ENCODE measurements at regions of chr4 and their contacts with region 1.

Region 1: DNA sequence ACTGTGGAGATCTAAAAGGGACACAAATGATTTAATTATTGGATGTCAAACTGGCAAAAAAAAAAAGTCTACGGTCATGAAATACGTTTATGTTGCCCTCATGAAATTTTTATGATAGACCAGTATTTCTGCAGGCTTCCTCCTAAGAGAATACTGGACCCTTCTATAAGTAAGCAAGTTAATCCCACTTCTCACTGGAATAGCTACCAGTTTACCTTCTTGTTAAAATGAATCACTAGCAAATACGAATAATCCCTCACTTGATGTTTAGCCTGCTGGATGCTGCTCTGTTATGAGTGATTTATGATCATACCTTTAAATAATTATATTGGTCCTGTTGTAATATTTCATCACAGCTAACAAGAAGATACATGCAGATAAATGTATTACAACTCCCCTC is 39.6 kb upstream of the GRID2 start:
- DNase-seq: no peak
- H3K27ac ChIP-seq: no peak overlapping the region
- CTCF ChIP-seq: no peak

Region 2: GRCh38 chr4:90641861-90642599 is 1622.1 kb before region 1 on chr4:
- CTCF ChIA-PET with region 1: interaction called, 10 read pairs
- POLR2A ChIA-PET with region 1: no interaction called
- DNase-seq: peak; percentile 0
- H3K27ac ChIP-seq: no peak overlapping the region
- CTCF ChIP-seq: 0 out of 2 replicates have a peak, but pooled peaks have one; percentile 10

Region 3: GRCh38 chr4:92249541-92249940 is 14.6 kb before region 1 on chr4:
- CTCF ChIA-PET with region 1: no interaction called
- POLR2A ChIA-PET with region 1: no interaction called
- DNase-seq: no peak
- H3K27ac ChIP-seq: no peak overlapping the region
- CTCF ChIP-seq: no peak